Heart left ventricle (tissue), 16 donors: ENCODE measurements at regions of chr10 and their contacts with region 1.

Region 1: GRCh38 chr10:122703439-122704118 is 3.9 kb upstream of the C10orf120 start:
- DNase-seq: peak; percentile 65 to 80 (median 76)
- ATAC-seq: peak; percentile 79 to 97 (median 93)
- H3K4me3 ChIP-seq: no peak overlapping the region
- H3K27ac ChIP-seq: no peak overlapping the region
- H3K4me1 ChIP-seq: peaks cover 0 to 10% (median 0%) of the 10 kb centered on the region in 12 donors
- H3K27me3 ChIP-seq: no peaks in the 10 kb centered on the region
- CTCF ChIP-seq: peak; percentile 70 to 94 (median 86)
- POLR2A ChIP-seq: no peak

Region 2: GRCh38 chr10:122279725-122280141 is 423.8 kb before region 1 on chr10:
- intact Hi-C with region 1: loop called in 3 of 10 experiments (anchors 10 kb)
- DNase-seq: peak in 3 of 5 donors; percentile 33 to 58 (median 34)
- ATAC-seq: peak; percentile 57 to 75 (median 72)
- H3K4me3 ChIP-seq: no peak overlapping the region
- H3K27ac ChIP-seq: no peak overlapping the region
- H3K4me1 ChIP-seq: peaks cover 0 to 13% (median 0%) of the 10 kb centered on the region in 12 donors
- H3K27me3 ChIP-seq: peaks cover 0 to 2% (median 0%) of the 10 kb centered on the region in 9 donors
- CTCF ChIP-seq: peak; percentile 40 to 69 (median 58)
- POLR2A ChIP-seq: no peak

Region 3: DNA sequence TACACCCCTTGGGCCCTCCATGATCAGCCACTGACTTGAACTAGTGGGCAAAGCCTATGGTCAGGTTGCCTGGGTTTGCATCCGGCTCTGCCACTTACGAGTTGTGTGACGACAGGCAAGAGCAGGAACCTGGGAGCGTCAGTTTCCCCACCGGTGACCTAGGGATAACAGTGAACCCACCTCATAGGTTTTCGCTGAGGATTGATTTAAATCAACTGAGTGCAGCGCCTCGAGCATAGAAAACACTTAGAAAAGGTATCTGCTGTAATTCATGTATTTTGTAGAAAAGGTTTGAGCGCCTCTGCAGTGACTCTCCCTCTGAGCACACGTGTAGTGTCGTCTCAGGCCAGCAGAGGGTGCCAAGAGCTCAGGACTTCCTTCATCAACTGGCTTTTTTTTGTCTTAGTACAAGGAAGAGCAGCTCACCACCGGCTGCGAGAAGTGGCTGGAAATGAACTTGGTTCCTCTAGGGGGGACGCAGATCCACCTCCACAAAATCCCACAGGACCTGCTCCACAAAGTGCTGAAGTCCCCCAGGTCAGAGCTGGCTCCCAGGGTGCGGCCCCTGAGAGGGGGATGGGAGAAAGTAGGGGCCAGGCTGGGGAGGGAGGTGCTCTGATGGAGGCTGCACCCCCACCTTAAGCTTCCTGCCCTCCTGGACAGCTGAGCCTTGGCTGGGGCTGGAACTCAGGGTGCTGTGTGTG is 404.8 kb before region 1 on chr10:
- intact Hi-C with region 1: loop called in 6 of 10 experiments (anchors 5 to 10 kb)
- DNase-seq: peak; percentile 64 to 73 (median 66)
- ATAC-seq: peak in 3 of 4 donors; percentile 82 to 90 (median 88)
- H3K4me3 ChIP-seq: peak overlapping the region in 7 of 12 donors; percentile 15 to 37 (median 24)
- H3K27ac ChIP-seq: no peak overlapping the region
- H3K4me1 ChIP-seq: peaks cover 0 to 13% (median 0%) of the 10 kb centered on the region in 12 donors
- H3K27me3 ChIP-seq: no peaks in the 10 kb centered on the region
- CTCF ChIP-seq: peak; percentile 78 to 97 (median 92)
- POLR2A ChIP-seq: no peak

Region 4: DNA sequence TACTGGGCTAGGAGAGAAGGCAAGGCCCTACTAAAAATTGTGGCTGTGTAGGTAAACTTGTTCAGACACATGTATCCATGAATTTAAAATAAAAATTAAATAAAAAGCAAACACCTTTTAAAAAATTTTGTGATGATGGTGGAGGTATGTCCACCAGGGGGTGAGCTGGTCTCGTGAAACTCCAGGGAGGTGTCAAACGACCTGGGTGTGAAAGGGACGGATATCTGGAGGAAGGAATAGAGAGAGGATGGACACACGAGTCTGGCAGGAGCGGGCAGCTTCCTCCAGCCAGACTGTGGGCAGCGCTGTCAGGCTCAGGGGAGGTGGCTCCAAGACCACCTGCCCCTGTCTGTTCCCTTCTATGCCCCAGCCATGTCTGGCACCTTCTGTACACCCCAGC is 177.8 kb before region 1 on chr10:
- intact Hi-C with region 1: no loop called
- DNase-seq: no peak
- ATAC-seq: no peak
- H3K4me3 ChIP-seq: no peak overlapping the region
- H3K27ac ChIP-seq: no peak overlapping the region
- H3K4me1 ChIP-seq: peaks cover 0 to 16% (median 4%) of the 10 kb centered on the region in 12 donors
- H3K27me3 ChIP-seq: no peaks in the 10 kb centered on the region
- CTCF ChIP-seq: peak in 5 of 12 donors; percentile 12 to 43 (median 35)
- POLR2A ChIP-seq: no peak

Region 5: DNA sequence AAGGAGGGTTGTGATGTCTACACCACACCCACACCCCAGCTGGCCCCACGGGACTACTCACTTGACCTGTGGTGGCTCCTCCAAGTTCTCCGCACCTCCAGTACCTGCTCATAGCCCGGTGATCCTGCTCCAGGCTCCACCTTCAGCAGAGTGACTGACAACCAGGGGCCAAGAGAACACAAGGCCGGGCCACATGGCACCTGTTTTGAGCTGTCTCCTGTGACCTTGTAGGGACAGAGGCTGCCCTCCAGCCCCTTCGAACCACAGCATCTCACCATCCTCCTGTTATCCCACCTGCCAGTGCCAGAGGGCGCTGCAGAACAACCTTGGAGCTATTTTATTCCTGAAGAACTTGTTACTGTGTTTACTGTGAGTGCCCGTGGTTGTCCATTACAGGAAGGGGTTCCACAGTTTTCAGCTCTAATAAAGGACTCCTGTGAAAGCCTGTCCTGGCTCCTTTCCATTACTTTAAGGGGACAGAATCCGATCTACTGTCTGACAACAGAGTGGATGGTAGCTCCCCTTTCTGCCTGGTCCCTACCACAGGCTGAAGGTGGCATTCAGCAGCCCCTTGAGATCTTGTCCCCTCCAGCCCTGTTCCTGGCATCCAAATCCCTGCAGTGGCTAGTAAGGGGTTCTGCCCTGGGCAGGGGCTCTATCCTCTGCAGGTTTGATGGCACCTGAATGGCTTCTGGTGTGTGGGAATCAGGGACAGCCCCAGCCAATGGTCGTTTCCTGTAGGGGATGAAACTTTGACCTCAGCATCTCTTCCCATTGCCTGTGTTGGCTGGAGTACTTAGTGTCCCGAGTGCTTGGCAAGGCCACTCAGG is 54.8 kb before region 1 on chr10:
- intact Hi-C with region 1: loop called (anchors 1 to 5 kb)
- DNase-seq: peak in 4 of 5 donors; percentile 24 to 51 (median 48)
- ATAC-seq: peak; percentile 54 to 83 (median 69)
- H3K4me3 ChIP-seq: no peak overlapping the region
- H3K27ac ChIP-seq: no peak overlapping the region
- H3K4me1 ChIP-seq: peaks cover 0 to 4% (median 0%) of the 10 kb centered on the region in 12 donors
- H3K27me3 ChIP-seq: peaks cover 0 to 5% (median 0%) of the 10 kb centered on the region in 9 donors
- CTCF ChIP-seq: peak; percentile 62 to 88 (median 79)
- POLR2A ChIP-seq: no peak

Region 6: GRCh38 chr10:122767621-122768388 is 64.2 kb after region 1 on chr10:
- intact Hi-C with region 1: no loop called
- DNase-seq: no peak
- ATAC-seq: no peak
- H3K4me3 ChIP-seq: no peak overlapping the region
- H3K27ac ChIP-seq: no peak overlapping the region
- H3K4me1 ChIP-seq: no peaks in the 10 kb centered on the region
- H3K27me3 ChIP-seq: peaks cover 0 to 7% (median 0%) of the 10 kb centered on the region in 9 donors
- CTCF ChIP-seq: no peak
- POLR2A ChIP-seq: no peak